ENCODE measurements at regions of chr1 and their contacts with region 1.

Region 1: DNA sequence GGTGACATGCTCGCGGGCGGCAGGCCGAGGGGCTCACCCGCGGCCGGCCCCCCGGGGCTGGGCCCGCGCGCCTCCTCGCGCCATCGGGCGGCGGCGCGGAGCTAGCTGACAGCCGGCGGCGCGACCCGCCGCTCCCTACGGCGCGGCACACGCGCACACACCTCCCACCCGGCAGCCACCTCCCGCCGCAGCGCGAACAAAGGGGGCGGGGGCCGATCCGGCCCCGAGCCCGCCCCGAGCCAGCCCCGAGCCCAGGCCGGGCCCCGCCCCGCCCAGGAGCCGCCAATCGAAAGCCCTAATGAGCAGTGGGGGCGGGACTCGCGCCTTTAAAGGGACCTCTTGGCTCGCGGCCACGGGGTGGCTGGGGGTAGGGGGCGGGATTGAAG is at the start of gene KIF21B:
- DNase-seq: peak; percentile 52 to 63 (median 59)
- H3K4me3 ChIP-seq: peak within 1 kb of the TSS; percentile 40 to 74 (median 49)
- H3K4me3 Mint-ChIP-seq: peak within 1 kb of the TSS; percentile 87 to 92
- H3K27ac ChIP-seq: peak within 1 kb of the TSS in 1 of 2 donors; percentile 64
- H3K27ac Mint-ChIP-seq: peak within 1 kb of the TSS; percentile 38 to 91 (median 77)
- H3K4me1 ChIP-seq: peaks cover 92 to 95% of the 10 kb centered on the region in 2 donors
- H3K4me1 Mint-ChIP-seq: peaks cover 89% of the 10 kb centered on the region
- H3K27me3 ChIP-seq: no peaks in the 10 kb centered on the region
- H3K27me3 Mint-ChIP-seq: peaks cover 0 to 5% (median 2%) of the 10 kb centered on the region in 3 donors
- CTCF ChIP-seq: no peak
- polyA plus RNA-seq, gene KIF21B: 0.18 to 9.8 (median 0.30) TPM

Region 2: DNA sequence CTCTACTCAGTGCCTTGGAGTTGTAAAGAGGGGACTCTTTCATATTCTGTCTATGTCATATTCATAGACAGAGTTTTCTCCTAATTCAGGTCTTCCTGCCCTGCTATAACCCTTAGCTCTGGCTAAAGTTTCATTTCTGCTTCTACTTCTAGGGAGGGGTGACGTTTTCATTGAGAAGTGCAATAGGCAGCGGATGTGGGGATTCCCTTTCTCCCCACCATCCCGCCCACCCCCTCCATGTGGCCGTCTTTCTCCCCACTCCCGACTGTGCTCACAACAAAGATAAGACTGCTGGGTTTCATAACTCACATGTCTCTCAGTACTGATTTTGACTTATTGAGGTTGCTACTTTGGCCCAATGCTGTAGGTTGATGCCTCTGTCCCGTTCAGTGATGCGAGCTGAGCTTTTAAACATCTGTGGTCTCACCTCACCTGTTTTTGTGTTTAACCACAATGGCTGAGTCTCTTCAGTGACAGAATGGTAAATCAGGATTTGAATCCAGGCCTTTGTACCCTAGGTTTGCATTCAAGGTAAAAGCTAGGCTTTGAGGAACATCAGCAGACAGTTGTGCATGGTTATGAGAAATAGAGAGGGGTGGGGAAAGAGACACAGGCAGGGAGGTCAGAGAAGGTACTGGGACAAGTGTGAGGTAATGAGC is 395.2 kb before region 1 on chr1:
- intact Hi-C with region 1: loop called in 1 of 2 experiments (anchors 5 kb)
- DNase-seq: peak; percentile 76 to 88 (median 76)
- H3K4me3 ChIP-seq: peak overlapping the region in 1 of 3 experiments; percentile 43
- H3K4me3 Mint-ChIP-seq: peak overlapping the region; percentile 61 to 68
- H3K27ac ChIP-seq: peak overlapping the region; percentile 71 to 78
- H3K27ac Mint-ChIP-seq: peak overlapping the region; percentile 73 to 99 (median 96)
- H3K4me1 ChIP-seq: peaks cover 26 to 32% of the 10 kb centered on the region in 2 donors
- H3K4me1 Mint-ChIP-seq: peaks cover 30% of the 10 kb centered on the region
- H3K27me3 ChIP-seq: no peaks in the 10 kb centered on the region
- H3K27me3 Mint-ChIP-seq: peaks cover 0 to 5% (median 4%) of the 10 kb centered on the region in 3 donors
- CTCF ChIP-seq: no peak

Measured in CD14-positive monocyte (primary cell).